K562 (cell line): ENCODE measurements at regions of chr1 and their contacts with region 1.

Region 1: DNA sequence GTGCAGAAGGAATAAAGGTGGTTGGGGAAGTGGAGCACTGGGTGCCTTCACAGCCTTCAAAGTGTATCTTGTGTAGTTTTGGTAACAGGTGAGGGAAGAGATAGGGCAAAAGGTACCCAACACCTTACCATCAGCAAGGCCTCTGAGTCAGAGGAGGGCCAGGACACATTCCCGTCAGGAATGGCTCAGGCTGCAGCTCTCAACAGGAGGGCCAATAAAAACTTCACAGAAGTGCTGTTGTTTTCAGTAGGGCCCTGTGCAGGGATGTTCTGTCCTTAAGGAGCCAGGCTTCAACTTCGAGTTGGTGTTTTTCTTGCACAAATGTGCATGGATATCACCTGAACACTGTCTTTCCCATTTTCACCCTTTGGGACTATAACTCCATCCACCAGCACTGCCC is 333.4 kb downstream of the ASTN1 start:
- DNase-seq: no peak
- ATAC-seq: peak; percentile 38; the same call in 2 of the 3 replicates
- H3K4me3 ChIP-seq: no peak overlapping the region
- H3K27ac ChIP-seq: no peak overlapping the region
- H3K4me1 ChIP-seq: no peaks in the 10 kb centered on the region
- H3K27me3 ChIP-seq: peaks cover 0 to 21% of the 10 kb centered on the region in 2 experiments; a peak in 3 of 5 replicates
- CTCF ChIP-seq: no peak
- EP300 ChIP-seq: no peak
- POLR2A ChIP-seq: no peak
- RAD21 ChIP-seq: no peak

Region 2: DNA sequence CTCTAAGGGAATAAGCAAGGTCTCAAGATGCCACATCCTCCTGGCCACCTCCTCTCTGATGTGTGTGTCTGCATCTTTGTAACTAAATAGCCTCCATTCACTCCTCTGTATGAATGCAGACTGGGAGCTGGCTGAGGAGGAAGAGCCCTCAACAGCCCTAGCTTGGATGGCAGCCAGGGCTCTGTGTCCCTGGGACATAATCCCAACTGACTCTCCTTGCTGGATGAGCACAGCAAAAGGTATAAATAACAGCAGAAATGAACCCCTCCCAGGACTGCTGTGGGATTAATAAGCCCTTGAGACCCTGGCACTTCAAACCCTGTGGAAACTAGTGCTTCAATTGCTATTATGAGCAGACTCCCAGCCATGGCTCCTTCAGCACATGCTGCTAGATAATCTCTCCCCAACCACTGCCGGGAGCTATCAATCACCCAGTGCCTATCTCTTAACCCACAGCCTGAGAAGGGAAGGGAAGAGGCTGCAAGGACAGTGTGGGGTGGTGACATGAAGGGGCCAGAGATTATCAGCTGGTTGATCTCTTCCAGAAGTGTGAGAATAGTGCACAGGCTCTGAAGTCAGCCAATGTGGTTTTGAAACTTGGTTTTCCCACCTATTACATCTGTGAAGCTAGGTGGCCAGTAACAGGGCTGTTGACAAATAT is 1239.9 kb before region 1 on chr1:
- CTCF ChIA-PET with region 1: no interaction called
- POLR2A ChIA-PET with region 1: no interaction called
- in situ Hi-C with region 1: no loop called
- intact Hi-C with region 1: loop called (anchors 5 kb)
- DNase-seq: peak in 3 of 4 experiments; percentile 18 to 68 (median 54)
- ATAC-seq: peak; percentile 94
- H3K4me3 ChIP-seq: no peak overlapping the region
- H3K27ac ChIP-seq: no peak overlapping the region
- H3K4me1 ChIP-seq: peaks cover 3 to 16% of the 10 kb centered on the region in 2 experiments; a peak in 3 of 5 replicates
- H3K27me3 ChIP-seq: no peaks in the 10 kb centered on the region
- CTCF ChIP-seq: no peak
- EP300 ChIP-seq: no peak
- POLR2A ChIP-seq: no peak
- RAD21 ChIP-seq: no peak

Region 3: GRCh38 chr1:176617881-176618280 is 213.3 kb before region 1 on chr1:
- CTCF ChIA-PET with region 1: no interaction called
- POLR2A ChIA-PET with region 1: no interaction called
- in situ Hi-C with region 1: no loop called
- intact Hi-C with region 1: no loop called
- DNase-seq: no peak
- ATAC-seq: no peak
- H3K4me3 ChIP-seq: no peak overlapping the region
- H3K27ac ChIP-seq: no peak overlapping the region
- H3K4me1 ChIP-seq: no peaks in the 10 kb centered on the region
- H3K27me3 ChIP-seq: no peaks in the 10 kb centered on the region
- CTCF ChIP-seq: no peak
- EP300 ChIP-seq: no peak
- POLR2A ChIP-seq: no peak
- RAD21 ChIP-seq: no peak